ENCODE measurements at regions of chr10 and their contacts with region 1.

Region 1: GRCh38 chr10:75294866-75295701 is 59.3 kb upstream of the COMTD1 start:
- DNase-seq: peak; percentile 74
- H3K4me3 ChIP-seq: peak overlapping the region; percentile 59
- H3K27ac ChIP-seq: peak overlapping the region; percentile 26
- H3K4me1 ChIP-seq: no peaks in the 10 kb centered on the region
- H3K27me3 ChIP-seq: no peaks in the 10 kb centered on the region
- CTCF ChIP-seq: no peak

Region 2: GRCh38 chr10:75180592-75180991 is 114.5 kb before region 1 on chr10:
- intact Hi-C with region 1: no loop called
- DNase-seq: no peak
- H3K4me3 ChIP-seq: no peak overlapping the region
- H3K27ac ChIP-seq: no peak overlapping the region
- H3K4me1 ChIP-seq: peaks cover 4% of the 10 kb centered on the region
- H3K27me3 ChIP-seq: no peaks in the 10 kb centered on the region
- CTCF ChIP-seq: no peak

Region 3: GRCh38 chr10:75394221-75394620 is 99.1 kb after region 1 on chr10:
- intact Hi-C with region 1: loop called (anchors 5 kb)
- DNase-seq: no peak
- H3K4me3 ChIP-seq: no peak overlapping the region
- H3K27ac ChIP-seq: no peak overlapping the region
- H3K4me1 ChIP-seq: peaks cover 3% of the 10 kb centered on the region
- H3K27me3 ChIP-seq: peaks cover 6% of the 10 kb centered on the region
- CTCF ChIP-seq: no peak